Breast epithelium (tissue), 4 donors: ENCODE measurements at regions of chr2 and their contacts with region 1.

Region 1: GRCh38 chr2:5391362-5391761 is 300.8 kb upstream of the SOX11 start:
- DNase-seq: no peak
- H3K4me3 ChIP-seq: no peak overlapping the region
- H3K27ac ChIP-seq: no peak overlapping the region
- H3K4me1 ChIP-seq: no peaks in the 10 kb centered on the region
- H3K27me3 ChIP-seq: no peaks in the 10 kb centered on the region
- CTCF ChIP-seq: no peak
- POLR2A ChIP-seq: no peak

Region 2: GRCh38 chr2:5444168-5444567 is 52.8 kb after region 1 on chr2:
- intact Hi-C with region 1: loop called (anchors 2 kb)
- DNase-seq: no peak
- H3K4me3 ChIP-seq: no peak overlapping the region
- H3K27ac ChIP-seq: no peak overlapping the region
- H3K4me1 ChIP-seq: no peaks in the 10 kb centered on the region
- H3K27me3 ChIP-seq: no peaks in the 10 kb centered on the region
- CTCF ChIP-seq: no peak
- POLR2A ChIP-seq: no peak